Naive thymus-derived CD4-positive, alpha-beta T cell (primary cell): ENCODE measurements at regions of chr9 and their contacts with region 1.

Region 1: DNA sequence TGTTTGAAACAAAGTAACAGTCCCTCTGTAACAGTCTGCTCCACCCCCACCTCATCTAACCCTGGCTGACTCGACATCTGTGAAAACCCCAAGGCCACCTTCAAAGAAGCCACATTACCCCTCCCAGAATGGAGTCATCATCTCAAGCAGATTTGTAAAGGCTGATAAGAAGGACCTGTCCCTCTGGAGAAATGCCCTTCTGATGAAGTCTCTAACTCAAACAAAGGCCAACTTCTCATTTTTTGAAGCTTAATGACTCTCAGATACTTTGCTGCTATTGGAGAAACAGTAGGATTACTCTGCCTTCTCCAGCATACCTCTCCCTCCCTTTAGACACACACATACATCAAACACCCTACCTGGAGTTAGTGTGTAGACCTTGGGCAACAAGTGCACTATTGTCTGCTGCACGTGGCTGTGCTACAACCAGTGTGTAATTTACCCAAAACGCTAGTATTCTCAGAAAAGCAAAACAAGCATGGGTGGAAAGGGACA is 5.3 kb upstream of the SUSD1 start:
- DNase-seq: peak in 4 of 9 donors; percentile 3 to 55 (median 18)
- ATAC-seq: peak; percentile 74
- H3K4me3 ChIP-seq: no peak overlapping the region
- H3K4me3 Mint-ChIP-seq: peak overlapping the region in 5 of 10 donors; percentile 35 to 66 (median 51)
- H3K27ac ChIP-seq: no peak overlapping the region
- H3K27ac Mint-ChIP-seq: peak overlapping the region in 8 of 9 donors; percentile 39 to 90 (median 78)
- H3K4me1 ChIP-seq: peaks cover 26 to 44% of the 10 kb centered on the region in 2 donors
- H3K4me1 Mint-ChIP-seq: peaks cover 26 to 61% (median 56%) of the 10 kb centered on the region in 7 donors
- H3K27me3 ChIP-seq: no peaks in the 10 kb centered on the region
- H3K27me3 Mint-ChIP-seq: peaks cover 0 to 8% (median 0%) of the 10 kb centered on the region in 5 donors

Region 2: DNA sequence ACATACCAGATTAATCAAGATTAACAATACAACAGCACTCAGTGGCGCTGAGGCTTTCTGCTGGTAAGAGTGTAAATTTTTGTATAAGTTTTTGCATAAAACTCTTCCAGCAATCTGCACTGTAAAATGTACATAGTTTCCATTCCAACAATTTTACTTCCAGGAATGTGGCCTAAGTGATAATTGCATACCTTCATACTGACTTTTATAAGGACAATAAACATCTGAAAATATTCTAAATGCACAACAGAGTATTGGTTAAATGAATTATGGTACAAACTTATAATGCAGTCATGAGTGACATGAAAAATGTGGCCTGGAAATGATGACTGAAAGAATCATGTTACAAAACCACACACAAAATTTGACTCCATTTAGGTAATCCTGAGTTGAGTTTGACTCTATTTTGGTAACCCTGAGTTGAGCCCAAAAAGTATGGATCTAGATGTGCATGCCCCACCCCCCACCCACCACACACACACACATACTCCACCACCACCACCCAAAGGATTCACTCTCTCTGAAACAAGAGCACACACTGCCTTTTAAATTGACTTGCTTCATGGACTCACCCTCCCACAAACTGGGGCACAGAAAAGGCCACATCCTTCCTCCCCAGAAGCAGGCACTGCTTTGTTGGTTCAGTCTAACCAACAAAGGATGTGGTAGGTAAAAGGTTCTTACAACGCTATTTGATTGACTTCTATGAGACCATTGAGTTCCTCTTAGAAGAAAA is 143.0 kb before region 1 on chr9:
- CTCF ChIA-PET with region 1: no interaction called
- POLR2A ChIA-PET with region 1: no interaction called
- intact Hi-C with region 1: no loop called
- DNase-seq: peak in 8 of 9 donors; percentile 70 to 92 (median 86)
- ATAC-seq: peak; percentile 98
- H3K4me3 ChIP-seq: no peak overlapping the region
- H3K4me3 Mint-ChIP-seq: peak overlapping the region; percentile 57 to 84 (median 70)
- H3K27ac ChIP-seq: no peak overlapping the region
- H3K27ac Mint-ChIP-seq: peak overlapping the region; percentile 12 to 83 (median 42)
- H3K4me1 ChIP-seq: peaks cover 21 to 27% of the 10 kb centered on the region in 2 donors
- H3K4me1 Mint-ChIP-seq: peaks cover 29 to 71% (median 63%) of the 10 kb centered on the region in 7 donors
- H3K27me3 ChIP-seq: no peaks in the 10 kb centered on the region
- H3K27me3 Mint-ChIP-seq: peaks cover 0 to 18% (median 6%) of the 10 kb centered on the region in 5 donors

Region 3: GRCh38 chr9:112145886-112146285 is 34.5 kb before region 1 on chr9:
- CTCF ChIA-PET with region 1: no interaction called
- POLR2A ChIA-PET with region 1: no interaction called
- intact Hi-C with region 1: loop called in 1 of 2 experiments (anchors 5 kb)
- DNase-seq: no peak
- ATAC-seq: no peak
- H3K4me3 ChIP-seq: no peak overlapping the region
- H3K4me3 Mint-ChIP-seq: no peak overlapping the region
- H3K27ac ChIP-seq: no peak overlapping the region
- H3K27ac Mint-ChIP-seq: no peak overlapping the region
- H3K4me1 ChIP-seq: no peaks in the 10 kb centered on the region
- H3K4me1 Mint-ChIP-seq: no peaks in the 10 kb centered on the region
- H3K27me3 ChIP-seq: no peaks in the 10 kb centered on the region
- H3K27me3 Mint-ChIP-seq: no peaks in the 10 kb centered on the region